OCI-LY7 (cell line): ENCODE measurements at regions of chr9 and their contacts with region 1.

Region 1: GRCh38 chr9:123686131-123686828 is 243.6 kb downstream of the DENND1A start:
- DNase-seq: no peak
- H3K4me3 ChIP-seq: no peak overlapping the region
- H3K27ac ChIP-seq: no peak overlapping the region
- H3K4me1 ChIP-seq: peaks cover 37% of the 10 kb centered on the region
- CTCF ChIP-seq: no peak

Region 2: DNA sequence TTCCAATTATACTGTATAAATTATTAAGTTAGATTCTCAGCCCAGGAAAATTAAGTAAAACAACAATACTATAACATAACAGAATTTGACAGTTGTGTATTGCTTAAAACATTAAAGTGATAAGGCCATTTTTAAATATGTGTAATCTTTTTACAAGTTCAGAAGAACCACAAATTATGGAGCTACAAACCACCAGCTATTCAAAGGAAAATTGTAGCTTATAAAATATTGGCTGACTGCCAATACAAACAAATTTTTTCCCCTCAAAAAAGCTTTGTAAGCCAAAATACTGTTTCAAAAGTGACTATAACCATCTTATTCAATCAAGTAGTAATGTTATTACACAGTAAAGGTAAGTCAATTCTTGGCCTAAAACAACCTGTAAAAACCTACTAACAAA is 439.7 kb before region 1 on chr9:
- CTCF ChIA-PET with region 1: no interaction called
- POLR2A ChIA-PET with region 1: no interaction called
- intact Hi-C with region 1: no loop called
- DNase-seq: no peak
- H3K4me3 ChIP-seq: no peak overlapping the region
- H3K27ac ChIP-seq: no peak overlapping the region
- H3K4me1 ChIP-seq: peaks cover 23% of the 10 kb centered on the region
- CTCF ChIP-seq: no peak

Region 3: GRCh38 chr9:123536455-123536868 is 149.8 kb before region 1 on chr9:
- CTCF ChIA-PET with region 1: no interaction called
- POLR2A ChIA-PET with region 1: no interaction called
- intact Hi-C with region 1: no loop called
- DNase-seq: no peak
- H3K4me3 ChIP-seq: no peak overlapping the region
- H3K27ac ChIP-seq: no peak overlapping the region
- H3K4me1 ChIP-seq: no peaks in the 10 kb centered on the region
- CTCF ChIP-seq: no peak

Region 4: GRCh38 chr9:123696476-123696875 is 10.2 kb after region 1 on chr9:
- CTCF ChIA-PET with region 1: no interaction called
- POLR2A ChIA-PET with region 1: interaction called, 16 read pairs
- intact Hi-C with region 1: no loop called
- DNase-seq: no peak
- H3K4me3 ChIP-seq: no peak overlapping the region
- H3K27ac ChIP-seq: no peak overlapping the region
- H3K4me1 ChIP-seq: peaks cover 19% of the 10 kb centered on the region
- CTCF ChIP-seq: no peak